ENCODE measurements at regions of chr10 and their contacts with region 1.

Region 1: GRCh38 chr10:60069311-60069710 is 163.0 kb upstream of the CCDC6 start:
- DNase-seq: no peak
- H3K4me3 ChIP-seq: no peak overlapping the region
- H3K27ac ChIP-seq: no peak overlapping the region
- H3K4me1 ChIP-seq: no peaks in the 10 kb centered on the region
- H3K27me3 ChIP-seq: no peaks in the 10 kb centered on the region
- CTCF ChIP-seq: no peak
- EP300 ChIP-seq: no peak
- POLR2A ChIP-seq: no peak

Region 2: GRCh38 chr10:59361663-59362143 is 707.6 kb before region 1 on chr10:
- in situ Hi-C with region 1: no loop called
- intact Hi-C with region 1: no loop called
- DNase-seq: no peak
- H3K4me3 ChIP-seq: peak overlapping the region; percentile 43 to 54 (median 49)
- H3K27ac ChIP-seq: peak overlapping the region; percentile 73 to 85 (median 84)
- H3K4me1 ChIP-seq: peaks cover 0 to 23% (median 10%) of the 10 kb centered on the region in 4 donors
- H3K27me3 ChIP-seq: no peaks in the 10 kb centered on the region
- CTCF ChIP-seq: no peak
- EP300 ChIP-seq: no peak
- POLR2A ChIP-seq: no peak

Region 3: DNA sequence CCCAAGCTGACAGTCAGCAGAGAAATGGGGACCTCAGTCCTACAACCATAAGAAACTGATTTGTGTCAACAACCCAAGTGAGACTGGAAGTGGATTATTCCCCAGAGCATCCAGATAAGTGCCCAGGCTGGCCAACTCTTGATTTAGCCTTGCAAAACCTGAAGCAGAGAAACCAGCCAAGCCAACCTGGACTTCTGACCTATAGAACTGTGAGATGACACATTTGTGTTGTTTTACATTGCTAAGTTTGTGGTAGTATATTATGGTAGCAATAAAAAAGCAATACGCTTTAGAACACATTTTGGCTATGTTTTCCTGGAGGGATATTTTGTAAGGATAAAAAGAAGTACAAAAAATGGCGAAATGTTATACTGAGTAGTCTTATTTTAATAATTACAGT is 143.2 kb before region 1 on chr10:
- in situ Hi-C with region 1: no loop called
- intact Hi-C with region 1: loop called (anchors 10 kb)
- DNase-seq: peak; percentile 30
- H3K4me3 ChIP-seq: no peak overlapping the region
- H3K27ac ChIP-seq: no peak overlapping the region
- H3K4me1 ChIP-seq: no peaks in the 10 kb centered on the region
- H3K27me3 ChIP-seq: no peaks in the 10 kb centered on the region
- CTCF ChIP-seq: no peak
- EP300 ChIP-seq: no peak
- POLR2A ChIP-seq: no peak

Measured in transverse colon (tissue), 4 donors.